Mammary epithelial cell (primary cell): ENCODE measurements at regions of chr10 and their contacts with region 1.

Region 1: DNA sequence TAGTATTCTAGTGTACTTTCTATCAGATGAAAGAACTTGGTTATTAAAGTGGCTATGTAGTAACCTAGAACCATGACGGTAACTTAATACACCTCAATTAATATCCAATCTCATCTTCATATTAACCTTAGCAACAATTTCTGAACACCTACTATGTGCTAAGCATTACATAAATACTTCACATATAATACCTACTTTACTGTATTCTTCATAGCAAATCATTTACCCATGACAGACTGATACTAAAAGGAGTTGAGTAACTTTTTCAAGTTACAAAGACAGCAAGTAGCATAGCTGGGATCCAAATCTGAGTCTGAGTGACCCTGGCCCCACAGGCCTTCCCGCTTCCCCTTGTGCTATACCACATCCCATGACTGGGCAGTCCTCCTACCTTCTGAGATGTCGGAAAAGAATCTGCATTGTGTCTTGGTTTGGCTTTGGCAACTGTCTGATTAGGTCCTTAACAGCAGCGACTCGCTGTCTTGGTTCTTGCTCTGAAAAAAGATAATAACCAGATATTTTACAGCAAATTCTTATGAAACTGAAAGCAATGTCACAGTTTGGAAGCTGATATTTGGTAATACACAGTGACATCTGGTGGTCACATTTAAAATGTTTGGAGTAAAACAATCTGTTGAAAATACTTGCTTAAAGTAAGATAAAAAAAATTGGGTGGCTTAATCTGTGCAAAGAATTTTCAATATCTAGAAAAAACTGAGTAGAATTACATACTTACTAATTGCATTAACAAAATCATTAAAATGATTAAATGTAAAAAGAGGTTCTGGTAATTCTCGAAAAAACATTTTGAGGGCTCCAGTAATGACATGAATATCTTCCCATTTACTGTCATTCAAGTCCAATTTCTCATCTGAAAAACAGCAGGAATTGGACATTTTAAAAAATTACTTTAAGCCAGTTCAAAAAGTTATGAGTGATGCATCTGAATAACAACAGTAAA is 120.1 kb downstream of the ARHGAP12 start:
- DNase-seq: peak; percentile 18
- H3K4me3 ChIP-seq: no peak overlapping the region
- H3K27ac ChIP-seq: no peak overlapping the region
- H3K4me1 ChIP-seq: no peaks in the 10 kb centered on the region
- H3K27me3 ChIP-seq: no peaks in the 10 kb centered on the region
- CTCF ChIP-seq: peak in 1 of 2 donors; percentile 40

Region 2: DNA sequence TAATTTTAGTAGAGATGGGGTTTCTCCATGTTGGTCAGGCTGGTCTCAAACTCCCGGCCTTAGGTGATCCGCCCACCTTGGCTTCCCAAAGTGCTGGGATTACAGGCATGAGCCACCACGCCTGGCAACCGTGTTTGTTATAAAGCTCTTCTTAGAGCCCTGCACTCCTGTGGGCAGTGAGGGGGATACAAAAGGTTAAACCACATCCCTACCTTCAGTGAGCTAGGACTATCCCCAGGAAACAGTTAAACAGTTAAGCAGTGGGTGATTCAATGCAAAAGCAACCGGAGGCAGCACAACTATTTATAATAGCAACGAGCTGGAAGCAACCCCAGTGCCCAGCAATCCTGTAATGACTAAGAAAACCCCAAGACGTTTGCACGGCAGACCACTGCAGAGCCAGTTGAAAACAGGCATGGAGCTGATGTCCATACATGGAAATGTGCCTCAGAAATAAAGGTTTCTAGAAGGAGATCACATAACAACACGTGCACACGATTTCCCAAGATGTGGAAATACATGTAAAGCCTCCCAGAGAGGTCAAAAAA is 1071.8 kb before region 1 on chr10:
- CTCF ChIA-PET with region 1: no interaction called
- dilution Hi-C with region 1: no loop called
- in situ Hi-C with region 1: loop called in 1 of 2 experiments (anchors 25 kb)
- intact Hi-C with region 1: no loop called
- DNase-seq: peak; percentile 92
- H3K4me3 ChIP-seq: no peak overlapping the region
- H3K27ac ChIP-seq: no peak overlapping the region
- H3K4me1 ChIP-seq: no peaks in the 10 kb centered on the region
- H3K27me3 ChIP-seq: no peaks in the 10 kb centered on the region
- CTCF ChIP-seq: no peak

Region 3: DNA sequence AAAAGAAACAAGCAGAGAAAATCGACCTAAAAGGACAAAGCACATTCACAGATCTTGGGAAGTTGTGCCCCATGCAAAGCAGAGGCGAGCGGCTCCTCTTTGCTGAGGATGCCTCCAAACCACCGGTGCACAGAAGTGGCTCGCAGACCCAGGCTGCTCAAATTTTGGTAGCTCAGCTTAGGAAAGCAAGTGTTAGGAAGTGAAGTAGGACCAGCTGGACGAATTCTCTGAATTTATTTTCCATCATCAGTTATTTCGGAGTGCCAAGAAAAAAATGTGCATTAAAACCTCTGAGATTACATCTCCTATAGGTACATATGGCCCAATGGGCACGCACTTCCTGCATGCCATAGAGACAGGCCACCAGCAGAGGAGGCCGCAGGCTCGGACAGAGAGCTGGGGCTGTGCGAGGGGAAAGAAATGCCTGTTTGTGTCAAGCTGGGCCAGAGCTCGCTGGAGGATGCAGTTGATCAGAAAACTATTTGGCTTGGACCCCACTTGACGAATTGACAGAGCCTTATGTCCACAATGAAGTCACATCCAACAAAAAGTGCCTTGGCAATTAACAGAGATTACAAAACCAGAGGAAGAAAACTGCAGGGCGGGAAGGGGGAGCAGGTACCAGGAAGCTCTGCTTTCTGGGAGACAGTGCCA is 1056.7 kb before region 1 on chr10:
- CTCF ChIA-PET with region 1: no interaction called
- dilution Hi-C with region 1: no loop called
- in situ Hi-C with region 1: loop called in 1 of 2 experiments (anchors 25 kb)
- intact Hi-C with region 1: loop called (anchors 1 kb)
- DNase-seq: no peak
- H3K4me3 ChIP-seq: no peak overlapping the region
- H3K27ac ChIP-seq: no peak overlapping the region
- H3K4me1 ChIP-seq: no peaks in the 10 kb centered on the region
- H3K27me3 ChIP-seq: no peaks in the 10 kb centered on the region
- CTCF ChIP-seq: peak; percentile 85 to 87

Region 4: GRCh38 chr10:31031558-31032257 is 776.8 kb before region 1 on chr10 and contains the start of gene ZNF438:
- CTCF ChIA-PET with region 1: no interaction called
- dilution Hi-C with region 1: no loop called
- in situ Hi-C with region 1: no loop called
- intact Hi-C with region 1: loop called (anchors 1 kb)
- DNase-seq: peak; percentile 91
- H3K4me3 ChIP-seq: peak within 1 kb of the TSS; percentile 77 to 88 (median 78)
- H3K27ac ChIP-seq: peak within 1 kb of the TSS; percentile 98
- H3K4me1 ChIP-seq: peaks cover 21% of the 10 kb centered on the region
- H3K27me3 ChIP-seq: no peaks in the 10 kb centered on the region
- CTCF ChIP-seq: peak in 1 of 2 donors; percentile 76
- total RNA-seq, gene ZNF438: 1.2 to 3.2 TPM

Region 5: DNA sequence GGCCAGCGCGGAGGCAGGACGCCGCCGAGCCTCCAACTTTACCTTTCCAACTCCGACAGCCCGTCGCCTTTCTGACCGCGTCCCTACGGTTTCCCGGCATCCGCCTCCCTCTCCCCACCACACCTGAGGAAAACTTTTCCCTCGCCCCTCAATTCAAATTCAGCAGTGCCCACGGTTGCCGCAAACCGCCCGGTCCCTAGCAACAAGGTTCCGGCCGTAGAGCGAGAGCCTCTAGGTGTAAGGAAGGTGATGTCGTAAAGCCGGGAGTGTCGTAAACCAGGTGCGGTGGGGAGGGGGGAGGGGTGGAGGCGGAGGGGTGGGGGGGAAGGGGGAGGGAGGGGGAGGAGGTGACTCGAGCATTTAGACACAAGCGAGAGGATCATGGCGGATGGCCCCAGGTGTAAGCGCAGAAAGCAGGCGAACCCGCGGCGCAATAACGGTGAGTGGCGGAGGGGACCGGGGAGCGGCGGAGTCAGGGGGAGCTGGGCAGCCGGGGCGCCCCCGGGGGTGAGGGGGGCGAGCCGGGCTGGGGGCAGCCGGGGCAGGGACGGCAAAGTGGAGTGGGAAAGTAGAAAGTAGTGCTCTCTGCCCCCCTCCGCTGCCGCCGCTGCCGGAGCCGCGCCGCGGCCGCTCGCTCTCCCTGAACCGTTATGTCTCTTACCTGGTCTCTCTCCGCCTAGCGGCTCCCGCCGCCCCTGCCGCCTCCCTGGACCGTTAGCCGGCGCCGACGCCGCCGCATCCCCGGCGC is 489.5 kb before region 1 on chr10 and contains the start of gene ZEB1:
- CTCF ChIA-PET with region 1: no interaction called
- dilution Hi-C with region 1: no loop called
- in situ Hi-C with region 1: no loop called
- intact Hi-C with region 1: loop called (anchors 2 kb)
- DNase-seq: peak; percentile 86
- H3K4me3 ChIP-seq: peak within 1 kb of the TSS; percentile 76 to 98 (median 98)
- H3K27ac ChIP-seq: peak within 1 kb of the TSS; percentile 72
- H3K4me1 ChIP-seq: peaks cover 21% of the 10 kb centered on the region
- H3K27me3 ChIP-seq: peaks cover 26% of the 10 kb centered on the region
- CTCF ChIP-seq: peak; percentile 12 to 54
- total RNA-seq, gene ZEB1: 1.2 to 1.3 TPM

Region 6: DNA sequence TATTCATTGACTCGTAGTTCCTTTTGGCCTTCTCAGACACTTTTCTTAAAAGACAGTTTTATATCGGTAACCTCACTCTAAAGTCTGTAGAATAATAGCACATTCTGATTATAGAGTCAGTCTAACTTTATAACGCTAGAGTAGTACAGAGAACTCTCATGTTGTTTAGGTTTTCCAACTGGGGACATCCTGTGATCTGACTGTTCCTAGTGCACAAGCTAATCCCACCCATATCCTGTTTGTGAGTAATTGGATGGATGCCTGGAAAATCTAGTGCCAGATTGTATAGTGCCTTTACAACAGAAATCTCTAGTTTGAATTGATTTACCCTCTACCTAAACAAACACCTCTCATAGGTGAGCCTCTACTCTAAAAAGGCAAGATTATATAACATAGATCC is 382.1 kb before region 1 on chr10:
- CTCF ChIA-PET with region 1: no interaction called
- dilution Hi-C with region 1: no loop called
- in situ Hi-C with region 1: no loop called
- intact Hi-C with region 1: no loop called
- DNase-seq: peak; percentile 38
- H3K4me3 ChIP-seq: no peak overlapping the region
- H3K27ac ChIP-seq: no peak overlapping the region
- H3K4me1 ChIP-seq: no peaks in the 10 kb centered on the region
- H3K27me3 ChIP-seq: no peaks in the 10 kb centered on the region
- CTCF ChIP-seq: no peak

Region 7: DNA sequence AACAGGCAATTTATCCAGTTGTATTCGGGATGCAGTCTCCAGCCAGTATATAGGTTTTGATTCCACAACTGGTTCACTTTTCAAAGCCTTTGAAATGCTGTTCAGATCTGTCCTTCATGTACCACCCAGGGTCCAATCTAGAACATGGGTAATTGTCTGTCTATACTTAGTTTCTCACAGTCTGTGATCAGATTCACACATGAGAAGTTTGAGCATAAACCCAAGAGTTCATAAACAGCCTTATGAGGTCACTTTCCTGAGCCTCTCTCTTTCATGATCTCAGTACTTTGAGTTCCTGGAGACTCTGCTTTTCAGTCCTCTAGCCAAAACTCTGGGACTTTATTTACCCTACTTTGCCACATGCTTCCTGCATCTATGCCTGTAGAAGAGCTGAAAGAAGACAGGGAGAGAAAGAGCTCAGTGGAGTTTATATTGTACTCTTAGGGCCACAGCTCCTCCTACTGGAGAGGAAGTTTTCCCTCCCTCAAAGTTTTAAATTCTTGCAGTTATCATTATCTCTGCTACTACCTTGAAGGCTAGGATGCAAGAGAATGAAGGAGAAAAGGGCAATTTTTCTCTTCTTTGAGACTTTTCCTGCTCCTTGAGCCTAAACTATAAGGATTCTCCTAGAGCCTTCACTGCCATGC is 317.6 kb before region 1 on chr10:
- CTCF ChIA-PET with region 1: no interaction called
- dilution Hi-C with region 1: no loop called
- in situ Hi-C with region 1: loop called in 1 of 2 experiments (anchors 25 kb)
- intact Hi-C with region 1: loop called (anchors 5 kb)
- DNase-seq: peak; percentile 29
- H3K4me3 ChIP-seq: no peak overlapping the region
- H3K27ac ChIP-seq: no peak overlapping the region
- H3K4me1 ChIP-seq: no peaks in the 10 kb centered on the region
- H3K27me3 ChIP-seq: peaks cover 5% of the 10 kb centered on the region
- CTCF ChIP-seq: peak; percentile 72 to 79

Region 8: GRCh38 chr10:31669357-31669756 is 139.2 kb before region 1 on chr10:
- CTCF ChIA-PET with region 1: no interaction called
- dilution Hi-C with region 1: no loop called
- in situ Hi-C with region 1: no loop called
- intact Hi-C with region 1: no loop called
- DNase-seq: no peak
- H3K4me3 ChIP-seq: no peak overlapping the region
- H3K27ac ChIP-seq: no peak overlapping the region
- H3K4me1 ChIP-seq: no peaks in the 10 kb centered on the region
- H3K27me3 ChIP-seq: no peaks in the 10 kb centered on the region
- CTCF ChIP-seq: no peak

Region 9: DNA sequence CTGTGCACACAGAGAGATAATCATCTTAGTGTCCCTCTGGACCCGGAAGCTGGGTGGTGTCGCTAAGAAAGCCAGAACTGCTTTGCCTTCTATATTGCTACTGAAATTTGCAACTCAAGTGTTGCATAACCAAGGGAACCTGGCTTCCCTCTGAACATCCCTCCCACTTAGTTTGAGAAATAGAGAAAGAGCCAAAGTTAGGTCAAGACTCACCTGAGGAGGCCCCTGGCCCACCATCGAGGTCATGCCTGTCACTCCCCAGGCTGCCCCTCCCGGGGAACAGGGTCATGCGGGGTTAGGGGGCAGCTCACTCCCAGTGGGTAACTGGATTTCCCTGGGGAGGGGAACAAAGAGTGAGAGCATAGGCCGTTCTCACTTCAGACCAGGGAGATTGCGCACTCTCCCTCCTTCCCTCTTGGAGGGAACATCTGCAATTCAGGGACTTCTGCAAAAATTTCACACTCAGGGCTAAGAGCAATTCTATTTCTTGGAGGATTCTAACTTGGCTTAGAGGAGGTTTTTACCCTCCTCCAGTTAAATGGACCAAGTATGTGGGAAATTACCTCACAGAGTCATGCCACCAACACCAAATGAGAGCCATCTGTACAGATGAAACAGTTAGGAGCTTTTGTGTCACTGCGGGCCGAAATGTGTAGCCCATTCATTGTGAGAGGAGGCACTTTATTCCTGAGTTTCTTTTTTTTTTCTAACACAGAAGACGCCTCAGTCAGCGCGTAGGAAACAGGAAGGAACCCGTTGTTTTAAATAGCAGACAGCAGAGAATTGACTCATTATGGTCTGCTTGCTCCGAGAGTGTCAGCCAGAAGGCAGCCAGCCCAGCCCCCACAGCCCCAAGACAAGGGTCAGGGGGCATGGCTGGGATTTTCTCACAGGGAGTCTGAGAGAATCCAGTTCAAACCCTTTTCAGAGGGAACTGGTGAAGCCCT is 101.2 kb before region 1 on chr10:
- CTCF ChIA-PET with region 1: no interaction called
- dilution Hi-C with region 1: no loop called
- in situ Hi-C with region 1: no loop called
- intact Hi-C with region 1: loop called (anchors 1 kb)
- DNase-seq: peak; percentile 32
- H3K4me3 ChIP-seq: no peak overlapping the region
- H3K27ac ChIP-seq: no peak overlapping the region
- H3K4me1 ChIP-seq: no peaks in the 10 kb centered on the region
- H3K27me3 ChIP-seq: no peaks in the 10 kb centered on the region
- CTCF ChIP-seq: no peak